ENCODE measurements at regions of chrX and their contacts with region 1.

Region 1: DNA sequence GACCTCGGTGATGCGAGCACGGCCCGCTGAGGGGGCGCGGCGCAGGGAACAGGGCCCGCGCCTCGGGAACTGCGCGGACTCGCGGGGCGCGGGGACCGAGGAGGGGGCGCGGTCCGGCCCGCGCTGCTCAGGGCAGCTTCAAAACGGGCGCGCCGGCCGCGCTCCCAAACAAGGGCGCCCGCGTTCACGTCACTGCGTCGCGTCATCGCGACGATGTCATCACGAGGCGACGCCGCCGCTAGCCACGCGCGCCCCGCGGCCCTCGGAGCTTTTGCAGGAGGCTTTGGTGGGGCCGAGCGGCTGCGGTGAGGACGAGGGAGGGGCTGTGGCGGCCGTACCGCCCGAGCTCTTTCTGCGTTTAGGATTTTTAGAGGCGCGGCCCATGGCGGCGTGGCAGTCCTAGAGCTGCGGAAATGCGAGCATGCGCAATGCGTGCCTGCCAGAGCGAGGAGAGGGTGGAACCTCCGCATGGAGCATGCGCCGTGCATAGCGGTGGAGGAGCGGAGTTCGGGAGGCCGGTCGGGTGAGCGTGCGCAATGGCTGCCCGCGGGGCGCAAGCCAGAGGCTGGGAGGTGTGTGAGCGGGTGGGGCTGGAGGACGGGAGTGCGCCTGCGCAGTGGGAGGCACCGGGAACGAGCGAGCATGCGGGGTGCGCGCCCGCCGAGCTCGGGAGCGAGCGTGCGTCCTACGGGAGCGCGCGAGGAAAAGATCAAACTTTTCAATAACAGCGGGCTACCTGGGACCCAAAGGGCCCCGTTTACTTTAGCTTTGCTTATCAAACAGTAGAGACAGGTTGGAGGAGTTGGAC is at the start of gene PPP2R3B:
- DNase-seq: peak; percentile 98 to 99
- H3K4me3 ChIP-seq: peak within 1 kb of the TSS; percentile 87 to 98 (median 98)
- H3K27ac ChIP-seq: peak within 1 kb of the TSS; percentile 99 to 100 (median 99)
- H3K4me1 ChIP-seq: peaks cover 4 to 19% of the 10 kb centered on the region in 2 donors
- H3K27me3 ChIP-seq: no peaks in the 10 kb centered on the region
- CTCF ChIP-seq: peak in 1 of 6 experiments; percentile 7
- POLR2A ChIP-seq: peak in 1 of 2 donors; percentile 66
- total RNA-seq, gene PPP2R3B: 9.7 to 15.2 (median 12.3) TPM

Region 2: GRCh38 chrX:318739-319578 is 68.0 kb before region 1 on chrX and contains the start of gene GTPBP6:
- intact Hi-C with region 1: loop called (anchors 5 kb)
- DNase-seq: peak; percentile 100
- H3K4me3 ChIP-seq: peak within 1 kb of the TSS; percentile 84 to 91 (median 84)
- H3K27ac ChIP-seq: peak within 1 kb of the TSS; percentile 78 to 95 (median 90)
- H3K4me1 ChIP-seq: peaks cover 12 to 15% of the 10 kb centered on the region in 2 donors
- H3K27me3 ChIP-seq: no peaks in the 10 kb centered on the region
- CTCF ChIP-seq: peak in 1 of 6 experiments; percentile 23
- POLR2A ChIP-seq: peak in 1 of 2 donors; percentile 79
- total RNA-seq, gene GTPBP6: 39.9 to 54.9 (median 47.9) TPM

Region 3: GRCh38 chrX:599837-600715 is 213.1 kb after region 1 on chrX:
- intact Hi-C with region 1: no loop called
- DNase-seq: no peak
- H3K4me3 ChIP-seq: no peak overlapping the region
- H3K27ac ChIP-seq: no peak overlapping the region
- H3K4me1 ChIP-seq: no peaks in the 10 kb centered on the region
- H3K27me3 ChIP-seq: no peaks in the 10 kb centered on the region
- CTCF ChIP-seq: no peak
- POLR2A ChIP-seq: no peak